HEK293 (cell line): ENCODE measurements at regions of chr19 and their contacts with region 1.

Region 1: GRCh38 chr19:7355151-7355820 is 6.5 kb downstream of the ARHGEF18 start:
- H3K4me3 ChIP-seq: no peak overlapping the region
- H3K27ac ChIP-seq: no peak overlapping the region
- H3K4me1 ChIP-seq: no peaks in the 10 kb centered on the region
- CTCF ChIP-seq: no peak

Region 2: GRCh38 chr19:7257148-7258034 is 97.9 kb before region 1 on chr19:
- CTCF ChIA-PET with region 1: no interaction called
- POLR2A ChIA-PET with region 1: no interaction called
- H3K4me3 ChIP-seq: no peak overlapping the region
- H3K27ac ChIP-seq: no peak overlapping the region
- H3K4me1 ChIP-seq: no peaks in the 10 kb centered on the region; the same call in 1 of the 2 replicates
- CTCF ChIP-seq: no peak

Region 3: DNA sequence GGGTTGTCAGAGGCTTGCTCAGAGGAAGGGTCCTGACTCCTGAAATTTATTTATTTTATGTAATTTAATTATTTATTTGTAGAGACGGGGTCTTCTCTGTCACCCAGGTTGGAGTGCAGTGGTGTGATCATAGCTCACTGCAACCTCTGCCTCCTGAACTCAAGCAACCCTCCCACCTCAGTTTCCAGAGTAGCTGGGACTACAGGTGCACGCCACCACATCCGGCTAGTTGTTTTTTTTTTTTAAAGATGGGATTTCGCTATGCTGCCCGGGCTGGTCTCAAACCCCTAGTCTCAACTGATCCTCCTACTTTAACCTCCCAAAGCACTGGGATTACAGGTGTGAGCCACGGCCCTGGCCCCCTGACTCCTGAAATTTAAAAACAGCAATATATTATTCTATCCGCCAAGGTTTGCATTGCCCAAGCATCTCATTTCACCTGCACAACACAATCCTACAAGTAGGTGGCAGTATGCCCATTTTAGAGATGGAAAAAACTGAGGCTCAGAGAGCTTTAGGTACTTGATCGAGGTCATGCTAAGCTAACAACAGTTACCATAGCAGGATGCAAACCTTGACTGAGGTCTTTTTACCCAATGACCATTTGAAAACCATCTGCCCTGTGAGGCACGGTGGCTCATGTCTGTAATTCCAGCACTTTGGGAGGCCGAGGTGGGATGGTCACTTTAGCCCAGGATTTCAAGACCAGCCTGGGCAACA is 11.6 kb after region 1 on chr19:
- CTCF ChIA-PET with region 1: interaction called, 21 read pairs
- POLR2A ChIA-PET with region 1: interaction called, 3 read pairs
- H3K4me3 ChIP-seq: no peak overlapping the region
- H3K27ac ChIP-seq: no peak overlapping the region
- H3K4me1 ChIP-seq: no peaks in the 10 kb centered on the region
- CTCF ChIP-seq: no peak

Region 4: DNA sequence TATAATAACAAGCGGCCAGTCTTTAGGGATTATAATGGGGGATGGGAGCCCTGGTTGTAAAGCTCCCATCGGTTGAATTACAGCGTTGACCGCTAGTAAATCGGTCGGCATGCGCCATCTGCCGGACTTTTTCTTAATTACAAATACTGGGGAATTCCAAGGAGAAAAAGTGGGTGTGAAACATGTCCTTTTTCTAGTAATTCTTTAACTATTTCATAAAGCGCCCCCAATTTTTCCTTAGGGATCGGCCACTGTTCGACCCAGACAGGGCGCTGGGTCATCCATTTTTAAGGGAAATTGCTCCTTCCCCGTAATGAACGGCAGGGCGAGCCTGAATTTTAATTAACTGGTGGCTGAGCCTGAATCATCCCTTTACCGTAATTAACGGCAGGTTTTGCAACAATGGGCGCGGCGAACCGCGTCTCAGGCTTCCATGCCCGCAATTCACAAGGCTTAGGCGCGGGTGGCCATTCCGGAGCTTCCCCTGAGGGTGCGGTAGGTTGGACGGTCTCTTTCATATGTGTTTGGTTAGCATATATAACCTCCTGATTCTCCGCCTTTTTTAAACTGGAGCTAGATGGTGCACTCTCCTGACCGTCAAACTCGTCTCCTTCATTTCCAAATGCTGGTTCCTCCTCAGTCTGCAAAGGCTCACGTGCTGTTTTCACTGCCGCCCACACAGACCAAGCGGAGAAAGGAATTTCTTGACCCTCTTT is 444.5 kb after region 1 on chr19:
- CTCF ChIA-PET with region 1: interaction called, 30 read pairs
- POLR2A ChIA-PET with region 1: interaction called, 4 read pairs
- H3K4me3 ChIP-seq: no peak overlapping the region
- H3K27ac ChIP-seq: no peak overlapping the region
- H3K4me1 ChIP-seq: no peaks in the 10 kb centered on the region
- CTCF ChIP-seq: 0 out of 2 replicates have a peak, but pooled peaks have one; percentile 23